ENCODE measurements at regions of chr18 and their contacts with region 1.

Region 1: GRCh38 chr18:63016270-63016669 is 300.9 kb downstream of the PHLPP1 start:
- DNase-seq: peak; percentile 73 to 84 (median 78)
- H3K4me3 ChIP-seq: no peak overlapping the region
- H3K27ac ChIP-seq: no peak overlapping the region
- H3K4me1 ChIP-seq: no peaks in the 10 kb centered on the region
- H3K27me3 ChIP-seq: no peaks in the 10 kb centered on the region

Region 2: DNA sequence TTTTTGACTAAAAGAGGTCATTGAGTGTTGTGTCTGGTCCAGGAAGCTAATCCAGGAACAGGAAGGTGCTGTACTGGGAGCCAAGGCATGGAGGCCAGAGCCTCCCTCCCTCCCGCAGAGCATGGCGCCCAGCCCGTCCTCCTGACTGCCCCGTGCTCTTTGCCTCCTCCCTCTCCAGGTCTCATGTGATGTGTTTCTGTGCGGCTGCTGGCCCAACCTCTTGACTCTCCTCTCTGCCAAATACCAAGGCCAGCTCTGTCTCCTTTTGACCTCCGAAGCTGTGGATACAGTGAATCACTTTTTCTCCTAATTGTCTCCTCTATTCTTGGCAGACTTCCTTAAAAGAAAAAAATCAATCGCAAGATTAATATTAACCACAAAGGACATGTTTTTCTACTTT is 16.9 kb before region 1 on chr18:
- CTCF ChIA-PET with region 1: interaction called, 21 read pairs
- POLR2A ChIA-PET with region 1: no interaction called
- DNase-seq: no peak
- H3K4me3 ChIP-seq: no peak overlapping the region
- H3K27ac ChIP-seq: no peak overlapping the region
- H3K4me1 ChIP-seq: no peaks in the 10 kb centered on the region
- H3K27me3 ChIP-seq: no peaks in the 10 kb centered on the region

Region 3: DNA sequence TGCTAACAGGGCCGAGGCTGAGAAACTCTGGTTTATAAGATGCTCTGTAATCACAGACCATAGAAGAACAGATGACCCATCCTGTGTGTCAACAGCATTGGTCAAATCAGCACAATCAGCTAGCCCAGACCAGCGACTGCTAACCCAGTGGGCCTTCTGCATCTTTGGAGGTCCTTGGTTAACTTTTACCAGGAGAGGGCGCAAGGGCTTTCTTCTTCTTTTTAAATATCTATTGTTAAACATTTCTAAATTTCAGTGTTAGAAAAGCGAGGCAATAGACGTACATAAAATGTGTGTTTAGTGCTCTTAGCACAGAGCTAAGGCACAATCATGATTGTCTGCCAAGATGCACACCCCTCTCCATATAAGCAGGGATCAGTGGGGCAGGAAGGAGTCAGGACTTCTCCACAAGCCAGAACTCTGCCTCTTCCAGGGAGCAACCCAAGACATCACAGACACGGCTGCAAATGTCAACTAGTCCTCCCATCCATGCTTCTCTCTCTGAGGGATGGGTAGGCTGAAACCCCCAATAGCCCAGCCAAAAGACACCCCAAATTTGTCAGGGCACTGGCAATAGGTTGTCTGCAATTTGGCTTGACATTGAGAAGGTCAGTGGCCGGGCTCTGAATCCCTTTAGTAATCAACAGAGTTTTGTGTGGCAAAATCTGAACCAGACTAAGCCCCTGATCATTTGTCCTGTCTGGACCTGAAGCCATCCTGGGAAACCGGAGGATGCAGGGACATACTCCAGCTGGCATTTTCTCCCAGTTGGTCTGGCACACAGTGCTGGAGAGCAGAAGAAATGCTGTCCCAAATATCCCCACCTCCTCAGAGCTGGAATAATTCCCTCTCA is 115.1 kb after region 1 on chr18:
- CTCF ChIA-PET with region 1: interaction called, 26 read pairs
- POLR2A ChIA-PET with region 1: no interaction called
- DNase-seq: peak; percentile 63 to 76 (median 70)
- H3K4me3 ChIP-seq: no peak overlapping the region
- H3K27ac ChIP-seq: no peak overlapping the region
- H3K4me1 ChIP-seq: peaks cover 0 to 24% (median 13%) of the 10 kb centered on the region in 4 experiments
- H3K27me3 ChIP-seq: no peaks in the 10 kb centered on the region

Region 4: DNA sequence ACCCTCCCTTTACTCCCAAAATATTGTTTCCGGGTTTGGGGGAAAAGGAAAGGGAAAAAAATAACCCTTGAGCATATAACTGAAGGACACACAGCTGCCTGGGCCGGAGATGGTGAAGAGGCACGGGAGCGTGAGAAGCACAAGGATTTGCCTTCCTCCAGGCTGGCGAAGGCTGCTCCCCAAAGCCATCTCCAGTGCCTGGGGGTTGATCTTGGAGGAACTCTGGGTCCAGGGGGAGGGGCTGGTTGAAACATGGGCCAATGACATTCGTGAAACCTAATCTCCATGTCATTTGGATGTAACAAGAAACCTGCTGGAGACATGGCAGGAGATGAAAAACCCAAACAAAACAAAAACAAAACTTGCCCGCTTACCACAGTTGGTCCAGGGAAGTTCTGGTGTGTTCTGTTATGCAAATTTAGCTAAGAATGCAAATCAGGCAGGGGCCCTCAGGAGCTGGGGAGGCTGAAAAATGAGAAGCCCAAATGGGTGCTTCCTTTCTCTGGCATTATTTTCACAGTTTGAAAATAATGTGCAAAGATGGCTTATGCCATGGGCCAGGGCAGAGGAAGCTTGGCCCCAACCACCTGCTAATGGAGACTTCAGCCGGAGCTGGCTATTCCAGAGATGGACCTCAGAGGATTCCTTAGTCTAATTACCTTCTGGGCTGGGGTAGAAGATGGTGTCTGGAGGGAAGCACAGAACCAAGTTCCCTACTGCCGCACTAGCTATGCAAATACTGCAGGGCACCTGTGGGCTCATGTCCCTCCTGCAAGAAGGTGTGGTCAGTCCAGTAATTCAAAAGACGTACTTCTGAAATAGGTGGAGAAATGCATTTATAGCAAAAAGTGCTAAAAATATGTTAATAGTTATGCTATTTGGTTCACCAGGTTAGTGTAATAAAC is 122.4 kb after region 1 on chr18:
- CTCF ChIA-PET with region 1: interaction called, 18 read pairs
- POLR2A ChIA-PET with region 1: no interaction called
- DNase-seq: peak in 2 of 3 donors; percentile 50 to 70
- H3K4me3 ChIP-seq: peak overlapping the region in 5 of 7 experiments; percentile 34 to 67 (median 46)
- H3K27ac ChIP-seq: no peak overlapping the region
- H3K4me1 ChIP-seq: peaks cover 9 to 61% (median 49%) of the 10 kb centered on the region in 4 experiments
- H3K27me3 ChIP-seq: no peaks in the 10 kb centered on the region

Region 5: GRCh38 chr18:63155169-63155852 is 139.0 kb after region 1 on chr18:
- CTCF ChIA-PET with region 1: interaction called, 31 read pairs
- POLR2A ChIA-PET with region 1: no interaction called
- DNase-seq: peak; percentile 71 to 81 (median 79)
- H3K4me3 ChIP-seq: peak overlapping the region in 4 of 7 experiments; percentile 30 to 71 (median 58)
- H3K27ac ChIP-seq: no peak overlapping the region
- H3K4me1 ChIP-seq: peaks cover 0 to 13% (median 5%) of the 10 kb centered on the region in 4 experiments
- H3K27me3 ChIP-seq: no peaks in the 10 kb centered on the region

Region 6: DNA sequence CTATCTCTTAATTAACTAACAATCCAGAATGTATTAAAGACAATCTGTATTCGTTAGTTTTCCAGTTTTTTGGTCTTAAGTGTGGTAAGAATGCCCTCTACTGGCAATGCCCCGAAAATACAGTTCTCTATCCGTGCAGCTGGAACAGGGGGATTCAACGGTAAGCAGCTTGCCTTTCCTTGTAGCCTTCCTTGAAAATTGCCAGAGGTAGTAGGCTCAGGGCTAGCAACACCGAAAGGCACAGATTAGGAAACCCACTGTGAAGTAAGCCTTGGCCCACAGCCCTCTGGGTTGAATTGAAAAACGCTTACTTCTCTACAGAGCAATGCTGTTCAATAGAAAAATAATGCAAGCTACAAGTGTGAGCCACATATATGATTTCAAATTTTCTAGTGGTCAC is 423.1 kb after region 1 on chr18:
- CTCF ChIA-PET with region 1: interaction called, 14 read pairs
- POLR2A ChIA-PET with region 1: no interaction called
- DNase-seq: peak; percentile 70 to 82 (median 79)
- H3K4me3 ChIP-seq: no peak overlapping the region
- H3K27ac ChIP-seq: no peak overlapping the region
- H3K4me1 ChIP-seq: peaks cover 0 to 3% (median under 1%) of the 10 kb centered on the region in 4 experiments
- H3K27me3 ChIP-seq: no peaks in the 10 kb centered on the region